ENCODE measurements at regions of chr2 and their contacts with region 1.

Region 1: GRCh38 chr2:24971536-24972314 is at the start of gene DNAJC27:
- DNase-seq: peak; percentile 98
- ATAC-seq: peak; percentile 94
- H3K4me3 Mint-ChIP-seq: peak within 1 kb of the TSS; percentile 96
- H3K27ac Mint-ChIP-seq: peak within 1 kb of the TSS; percentile 100
- H3K4me1 Mint-ChIP-seq: peaks cover 23% of the 10 kb centered on the region
- H3K27me3 Mint-ChIP-seq: no peaks in the 10 kb centered on the region
- total RNA-seq, gene DNAJC27: 6.5 to 8.7 TPM

Region 2: DNA sequence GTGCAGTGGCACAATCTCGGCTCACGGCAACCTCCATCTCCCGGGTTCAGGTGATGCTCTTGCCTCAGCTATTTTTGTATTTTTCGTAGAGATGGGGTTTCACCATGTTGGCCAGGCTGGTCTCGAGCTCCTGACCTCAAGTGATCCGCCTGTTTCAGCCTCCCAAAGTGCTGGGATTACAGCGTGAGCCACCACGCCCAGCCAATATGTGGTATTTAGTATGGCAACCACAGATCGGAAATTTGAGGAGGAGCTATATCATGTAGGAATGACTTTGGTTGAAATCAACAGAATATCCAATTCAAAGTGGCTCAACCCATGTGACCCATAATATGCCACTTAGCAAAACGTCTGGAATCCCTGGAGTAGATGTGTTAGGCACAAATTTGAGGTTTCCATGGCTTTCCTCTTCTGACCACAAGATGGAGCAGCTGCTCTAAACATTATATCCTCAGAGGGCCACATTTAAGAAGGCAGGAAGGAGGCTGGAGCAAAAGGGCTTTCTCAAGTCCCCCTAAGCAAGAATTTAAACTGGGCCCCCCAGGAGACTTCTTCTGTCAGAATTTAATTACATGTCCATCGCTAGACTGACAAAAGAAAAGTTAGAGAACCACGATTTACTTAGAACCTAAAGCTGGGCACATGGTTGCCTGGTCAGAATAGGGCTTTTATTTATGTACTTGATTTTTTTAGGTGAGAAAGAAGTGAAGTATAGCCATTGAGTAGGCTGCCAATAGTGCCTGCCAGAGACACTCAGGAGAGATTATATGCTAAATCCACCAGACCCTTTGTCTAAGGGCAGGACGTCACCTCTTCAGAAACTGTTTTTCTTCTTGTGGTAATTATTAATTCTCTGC is 561.8 kb before region 1 on chr2:
- CTCF ChIA-PET with region 1: interaction called, 10 read pairs
- DNase-seq: peak; percentile 52
- ATAC-seq: peak; percentile 70
- H3K4me3 Mint-ChIP-seq: no peak overlapping the region
- H3K27ac Mint-ChIP-seq: no peak overlapping the region
- H3K4me1 Mint-ChIP-seq: peaks cover 3% of the 10 kb centered on the region
- H3K27me3 Mint-ChIP-seq: peaks cover 4% of the 10 kb centered on the region

Region 3: DNA sequence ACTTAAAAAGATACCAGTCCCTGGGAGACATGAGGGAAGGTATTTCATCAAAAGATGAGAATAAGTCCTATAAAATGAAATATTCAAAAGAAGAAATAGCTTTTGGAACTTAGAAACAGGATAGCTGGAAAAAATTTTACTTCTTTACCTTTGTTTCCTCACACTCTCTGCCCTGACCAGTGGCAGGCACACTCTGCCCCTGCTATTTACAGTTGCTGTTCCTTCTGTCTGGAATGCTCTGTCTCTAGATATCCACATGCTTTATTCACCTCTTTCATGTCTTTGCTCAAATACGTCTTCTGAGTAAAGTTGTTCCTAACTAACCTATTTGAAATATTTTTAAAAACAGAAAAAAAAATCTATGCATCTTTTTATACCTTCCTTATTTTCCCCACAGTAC is 304.2 kb before region 1 on chr2:
- CTCF ChIA-PET with region 1: no interaction called
- DNase-seq: no peak
- ATAC-seq: no peak
- H3K4me3 Mint-ChIP-seq: no peak overlapping the region
- H3K27ac Mint-ChIP-seq: no peak overlapping the region
- H3K4me1 Mint-ChIP-seq: peaks cover 5% of the 10 kb centered on the region
- H3K27me3 Mint-ChIP-seq: no peaks in the 10 kb centered on the region

Region 4: DNA sequence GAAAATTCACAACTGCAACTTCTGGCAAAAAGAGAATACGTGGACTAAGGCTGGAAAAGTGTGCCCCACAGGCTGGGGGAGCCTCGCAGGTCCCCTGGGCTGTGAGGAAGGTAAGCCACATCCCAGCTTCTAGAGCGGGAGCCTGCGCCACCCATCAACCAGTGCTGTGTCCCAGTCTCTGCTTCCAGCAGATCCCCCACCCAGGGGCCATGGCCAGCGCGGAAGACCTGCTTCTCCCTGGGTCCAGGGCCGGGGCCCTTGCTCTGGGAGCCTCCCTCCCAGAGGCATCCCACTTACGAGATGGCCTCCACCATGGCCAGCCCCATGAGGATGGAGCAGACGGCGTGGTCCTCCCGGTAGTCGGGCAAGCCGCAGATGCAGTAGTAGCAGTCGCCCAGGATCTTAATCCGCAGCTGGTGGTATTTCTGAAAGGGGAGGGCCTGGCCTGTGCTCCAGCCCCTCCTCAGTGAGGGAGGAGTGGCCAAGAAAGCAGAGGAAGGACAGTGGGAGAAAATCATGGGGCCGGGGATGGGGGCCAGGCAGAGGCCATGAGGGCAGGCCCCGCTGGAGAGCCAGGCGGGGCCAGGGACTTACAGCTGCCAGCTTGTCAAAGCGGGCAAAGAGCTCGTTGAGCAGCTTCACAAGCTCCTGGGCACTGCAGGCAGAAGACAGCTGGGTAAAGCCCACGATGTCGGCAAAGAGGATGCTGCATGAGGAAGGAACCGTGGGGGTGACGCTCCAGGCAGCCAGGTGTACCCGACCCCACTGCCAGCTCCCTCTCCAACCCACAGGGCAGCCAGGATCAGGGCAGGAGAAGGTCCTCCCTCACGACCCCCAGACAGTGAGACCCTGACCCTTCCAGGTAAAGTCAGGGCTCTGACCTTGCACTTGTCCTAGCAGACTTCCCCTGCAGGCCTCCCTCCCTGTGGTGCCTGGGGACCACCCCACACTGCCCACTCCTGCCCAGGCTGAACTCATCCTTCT is 130.5 kb before region 1 on chr2:
- CTCF ChIA-PET with region 1: no interaction called
- DNase-seq: no peak
- ATAC-seq: no peak
- H3K4me3 Mint-ChIP-seq: no peak overlapping the region
- H3K27ac Mint-ChIP-seq: no peak overlapping the region
- H3K4me1 Mint-ChIP-seq: no peaks in the 10 kb centered on the region
- H3K27me3 Mint-ChIP-seq: no peaks in the 10 kb centered on the region

Region 5: GRCh38 chr2:24871852-24872323 is 99.8 kb before region 1 on chr2:
- CTCF ChIA-PET with region 1: no interaction called
- DNase-seq: no peak
- ATAC-seq: no peak
- H3K4me3 Mint-ChIP-seq: no peak overlapping the region
- H3K27ac Mint-ChIP-seq: no peak overlapping the region
- H3K4me1 Mint-ChIP-seq: peaks cover 2% of the 10 kb centered on the region
- H3K27me3 Mint-ChIP-seq: no peaks in the 10 kb centered on the region

Region 6: DNA sequence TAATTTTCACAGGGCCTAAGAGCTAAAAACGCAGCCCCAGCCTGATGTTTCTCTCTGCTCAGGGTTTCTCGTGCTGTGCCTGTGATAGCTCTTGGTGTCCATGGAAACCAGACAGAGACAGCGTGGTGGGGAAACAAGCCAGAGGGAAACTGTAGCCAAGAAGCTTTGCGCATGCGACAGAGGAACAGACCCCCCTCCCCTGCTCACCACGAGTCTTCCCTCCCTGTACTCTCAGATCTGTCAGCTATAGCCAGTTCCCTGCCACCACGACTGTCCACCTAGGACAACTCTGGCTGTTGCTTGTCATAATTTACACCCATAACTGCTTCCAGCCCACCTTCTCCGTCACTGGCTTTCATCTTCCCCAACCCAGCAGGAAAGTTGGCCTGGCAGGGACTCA is 13.2 kb after region 1 on chr2:
- CTCF ChIA-PET with region 1: interaction called, 16 read pairs
- DNase-seq: no peak
- ATAC-seq: no peak
- H3K4me3 Mint-ChIP-seq: no peak overlapping the region
- H3K27ac Mint-ChIP-seq: no peak overlapping the region
- H3K4me1 Mint-ChIP-seq: no peaks in the 10 kb centered on the region
- H3K27me3 Mint-ChIP-seq: peaks cover 5% of the 10 kb centered on the region

Region 7: GRCh38 chr2:24993406-24994145 is 21.9 kb after region 1 on chr2:
- CTCF ChIA-PET with region 1: interaction called, 11 read pairs
- DNase-seq: no peak
- ATAC-seq: no peak
- H3K4me3 Mint-ChIP-seq: no peak overlapping the region
- H3K27ac Mint-ChIP-seq: no peak overlapping the region
- H3K4me1 Mint-ChIP-seq: no peaks in the 10 kb centered on the region
- H3K27me3 Mint-ChIP-seq: peaks cover 19% of the 10 kb centered on the region

Region 8: GRCh38 chr2:25131567-25132298 is 160.0 kb after region 1 on chr2:
- CTCF ChIA-PET with region 1: interaction called, 170 read pairs
- DNase-seq: no peak
- ATAC-seq: peak; percentile 23
- H3K4me3 Mint-ChIP-seq: no peak overlapping the region
- H3K27ac Mint-ChIP-seq: no peak overlapping the region
- H3K4me1 Mint-ChIP-seq: peaks cover 6% of the 10 kb centered on the region
- H3K27me3 Mint-ChIP-seq: peaks cover 67% of the 10 kb centered on the region

Region 9: GRCh38 chr2:25197336-25198208 is 225.8 kb after region 1 on chr2:
- CTCF ChIA-PET with region 1: interaction called, 38 read pairs
- DNase-seq: no peak
- ATAC-seq: no peak
- H3K4me3 Mint-ChIP-seq: no peak overlapping the region
- H3K27ac Mint-ChIP-seq: no peak overlapping the region
- H3K4me1 Mint-ChIP-seq: peaks cover 4% of the 10 kb centered on the region
- H3K27me3 Mint-ChIP-seq: peaks cover 4% of the 10 kb centered on the region

Measured in activated CD8-positive, alpha-beta memory T cell treated with anti-CD3 and anti-CD28 coated beads, Interleukin-2, amount 10 ng/mL, durations not matched to agents 7 days and 5 days (primary cell).